WTC11 (cell line): ENCODE measurements at regions of chr1 and their contacts with region 1.

Region 1: GRCh38 chr1:33295450-33296081 is 25.3 kb downstream of the A3GALT2 start:
- DNase-seq: peak; percentile 95
- ATAC-seq: peak; percentile 82
- H3K4me3 Mint-ChIP-seq: no peak overlapping the region
- H3K27ac Mint-ChIP-seq: peak overlapping the region; percentile 78
- H3K4me1 Mint-ChIP-seq: peaks cover 12% of the 10 kb centered on the region
- H3K27me3 Mint-ChIP-seq: no peaks in the 10 kb centered on the region
- CTCF ChIP-seq: peak; percentile 99

Region 2: GRCh38 chr1:33152685-33153432 is 142.7 kb before region 1 on chr1:
- CTCF ChIA-PET with region 1: interaction called, 10 read pairs
- POLR2A ChIA-PET with region 1: no interaction called
- DNase-seq: peak; percentile 78
- ATAC-seq: peak; percentile 87
- H3K4me3 Mint-ChIP-seq: peak overlapping the region; percentile 7; the same call in 1 of the 2 replicates
- H3K27ac Mint-ChIP-seq: peak overlapping the region; percentile 93
- H3K4me1 Mint-ChIP-seq: peaks cover 47% of the 10 kb centered on the region
- H3K27me3 Mint-ChIP-seq: no peaks in the 10 kb centered on the region; the same call in 1 of the 2 replicates
- CTCF ChIP-seq: no peak

Region 3: GRCh38 chr1:33276573-33277288 is 18.8 kb before region 1 on chr1:
- CTCF ChIA-PET with region 1: interaction called, 13 read pairs
- POLR2A ChIA-PET with region 1: no interaction called
- DNase-seq: no peak
- ATAC-seq: no peak
- H3K4me3 Mint-ChIP-seq: no peak overlapping the region
- H3K27ac Mint-ChIP-seq: no peak overlapping the region
- H3K4me1 Mint-ChIP-seq: peaks cover 26% of the 10 kb centered on the region
- H3K27me3 Mint-ChIP-seq: no peaks in the 10 kb centered on the region
- CTCF ChIP-seq: no peak

Region 4: GRCh38 chr1:33319949-33320605 is 24.5 kb after region 1 on chr1:
- CTCF ChIA-PET with region 1: interaction called, 14 read pairs
- POLR2A ChIA-PET with region 1: no interaction called
- DNase-seq: no peak
- ATAC-seq: no peak
- H3K4me3 Mint-ChIP-seq: no peak overlapping the region
- H3K27ac Mint-ChIP-seq: no peak overlapping the region
- H3K4me1 Mint-ChIP-seq: no peaks in the 10 kb centered on the region
- H3K27me3 Mint-ChIP-seq: peaks cover 23% of the 10 kb centered on the region
- CTCF ChIP-seq: no peak

Region 5: GRCh38 chr1:33342041-33342723 is 46.6 kb after region 1 on chr1:
- CTCF ChIA-PET with region 1: interaction called, 37 read pairs
- POLR2A ChIA-PET with region 1: no interaction called
- DNase-seq: peak; percentile 46
- ATAC-seq: peak; percentile 68
- H3K4me3 Mint-ChIP-seq: peak overlapping the region; percentile 39
- H3K27ac Mint-ChIP-seq: 0 out of 2 replicates have a peak overlapping the region, but pooled peaks have one; percentile 18
- H3K4me1 Mint-ChIP-seq: peaks cover 63% of the 10 kb centered on the region
- H3K27me3 Mint-ChIP-seq: peaks cover 81% of the 10 kb centered on the region
- CTCF ChIP-seq: no peak

Region 6: DNA sequence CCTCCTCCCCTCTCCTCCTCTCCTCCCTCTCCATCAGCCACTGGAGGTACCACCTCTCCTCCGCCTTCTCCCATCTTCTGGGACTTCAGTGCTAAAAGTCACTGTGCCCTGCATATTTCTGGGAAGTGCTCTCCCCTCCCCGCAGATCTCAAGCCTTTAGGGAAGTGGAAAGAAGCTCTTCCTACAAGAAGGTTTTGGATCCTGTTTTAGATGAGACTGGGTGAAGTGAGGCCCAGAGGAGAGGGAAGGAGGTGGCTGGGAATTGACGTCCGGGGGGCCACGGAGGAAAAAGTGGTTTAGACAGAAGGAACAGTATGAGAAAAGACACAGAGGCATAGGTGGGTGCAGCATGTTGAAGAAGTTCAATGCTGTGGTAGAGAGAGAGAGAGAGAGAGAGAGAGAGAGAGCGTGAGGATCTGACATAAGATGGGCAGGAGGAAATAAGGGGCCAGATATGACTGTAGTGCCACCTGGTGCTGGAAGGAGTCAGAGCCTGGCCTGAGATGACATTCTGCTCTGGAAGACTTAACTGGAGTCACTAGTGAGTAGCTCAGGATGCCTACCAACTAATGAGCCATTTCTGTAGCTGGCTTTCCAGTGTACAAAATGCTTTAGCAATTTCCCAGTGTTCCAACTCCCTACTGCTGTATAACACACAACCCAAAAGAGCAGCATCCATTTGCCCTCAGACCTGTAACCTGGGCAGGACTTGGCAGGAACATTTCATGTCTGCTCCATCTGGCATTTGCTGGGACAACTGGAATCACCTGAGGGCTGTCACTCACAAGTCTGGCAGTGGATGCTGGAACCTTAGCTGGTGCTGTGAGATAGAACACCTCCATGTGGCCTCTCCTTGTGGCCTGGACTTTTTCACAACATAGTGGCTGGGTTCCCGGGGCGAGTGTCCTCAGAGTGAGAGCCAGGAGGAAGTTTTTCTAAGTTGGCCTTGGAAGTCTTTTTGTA is 160.3 kb after region 1 on chr1:
- CTCF ChIA-PET with region 1: interaction called, 42 read pairs
- POLR2A ChIA-PET with region 1: no interaction called
- DNase-seq: peak; percentile 52
- ATAC-seq: peak; percentile 93
- H3K4me3 Mint-ChIP-seq: no peak overlapping the region
- H3K27ac Mint-ChIP-seq: no peak overlapping the region
- H3K4me1 Mint-ChIP-seq: peaks cover 12% of the 10 kb centered on the region
- H3K27me3 Mint-ChIP-seq: peaks cover 14% of the 10 kb centered on the region; the same call in 1 of the 2 replicates
- CTCF ChIP-seq: no peak